HCT116 (cell line): ENCODE measurements at regions of chr15 and their contacts with region 1.

Region 1: DNA sequence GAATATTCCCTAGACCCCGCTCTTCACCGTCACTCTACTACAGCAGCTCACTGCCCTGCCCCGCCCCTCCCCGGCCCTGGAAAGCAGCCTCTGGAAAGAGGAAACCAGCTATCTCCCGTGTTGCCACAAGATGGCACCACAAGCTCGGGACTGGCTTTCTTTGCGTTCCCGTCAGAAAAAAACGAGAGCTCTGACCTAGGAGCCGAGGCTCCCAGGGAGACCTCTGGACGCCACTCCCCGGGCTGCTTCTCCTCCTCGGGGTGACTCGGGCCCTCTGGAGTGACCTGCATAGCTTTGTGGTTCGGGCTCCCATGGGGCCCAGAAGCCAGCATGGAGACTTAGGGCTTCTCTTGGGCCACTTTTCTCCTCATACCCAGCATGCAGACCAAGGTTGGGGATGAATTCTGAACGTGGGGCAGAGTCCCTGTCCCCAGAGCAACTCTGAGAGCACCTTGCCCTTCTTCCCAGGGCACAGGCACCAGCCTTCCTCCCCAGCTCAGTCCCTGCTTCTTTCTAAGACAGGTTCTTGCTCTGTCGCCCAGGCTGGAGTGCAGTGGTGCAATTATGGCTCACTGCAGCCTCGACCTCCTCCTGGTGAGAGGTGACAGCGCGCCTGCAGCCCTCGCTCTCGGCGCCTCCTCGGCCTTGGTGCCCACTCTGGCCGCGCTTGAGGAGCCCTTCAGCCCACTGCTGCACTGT is 19.0 kb downstream of the STOML1 start:
- DNase-seq: no peak
- ATAC-seq: peak; percentile 95
- H3K4me3 ChIP-seq: peak overlapping the region; percentile 17 to 52; a peak in 3 of 4 replicates
- H3K27ac ChIP-seq: no peak overlapping the region; the same call in 1 of the 2 replicates
- H3K4me1 ChIP-seq: peaks cover 0 to 8% of the 10 kb centered on the region in 2 experiments; a peak in 2 of 4 replicates
- H3K27me3 ChIP-seq: no peaks in the 10 kb centered on the region
- CTCF ChIP-seq: peak; percentile 87 to 93 (median 87)
- POLR2A ChIP-seq: no peak
- RAD21 ChIP-seq: peak; percentile 98

Region 2: DNA sequence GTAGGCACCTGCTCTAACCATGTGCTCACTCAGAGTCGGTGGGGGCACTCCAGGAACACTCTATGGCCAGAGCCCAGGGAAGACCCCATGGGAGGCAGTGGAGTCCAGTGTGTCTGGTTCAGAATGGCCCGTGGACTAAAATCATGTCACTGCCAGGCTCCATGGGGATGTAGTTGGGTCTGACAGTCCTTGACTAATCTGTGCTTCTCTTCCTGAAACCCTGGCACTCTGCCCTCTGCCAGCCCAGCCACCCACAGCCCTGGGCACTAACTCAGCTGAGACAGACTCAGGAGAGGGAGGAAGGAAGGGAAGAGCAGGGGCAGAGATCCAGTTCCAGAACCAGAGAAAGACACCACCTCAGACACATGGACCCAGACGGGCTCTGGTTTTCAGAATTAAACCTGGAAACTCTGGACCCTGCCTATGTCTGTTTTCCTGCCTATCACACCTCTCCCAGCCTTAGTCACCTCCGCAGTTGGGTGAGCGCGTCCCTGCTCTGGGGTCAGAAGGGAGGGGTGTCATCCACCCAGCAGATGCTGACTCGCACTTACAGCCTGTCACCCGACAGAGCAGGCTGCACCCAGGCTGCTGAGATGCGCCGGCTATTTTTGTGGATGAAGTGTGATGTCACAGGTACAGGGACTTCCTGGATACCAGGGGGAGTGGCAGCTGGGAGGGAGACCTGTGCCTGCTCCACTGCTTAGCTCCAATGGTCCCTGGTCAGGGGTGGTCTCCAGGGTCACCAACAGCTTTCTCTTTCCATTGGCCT is 163.2 kb before region 1 on chr15:
- CTCF ChIA-PET with region 1: no interaction called
- POLR2A ChIA-PET with region 1: no interaction called
- RAD21 ChIA-PET with region 1: no interaction called
- intact Hi-C with region 1: no loop called
- DNase-seq: no peak
- ATAC-seq: peak; percentile 71
- H3K4me3 ChIP-seq: no peak overlapping the region
- H3K27ac ChIP-seq: no peak overlapping the region
- H3K4me1 ChIP-seq: peaks cover 3 to 10% of the 10 kb centered on the region in 2 experiments; a peak in 3 of 4 replicates
- H3K27me3 ChIP-seq: no peaks in the 10 kb centered on the region
- CTCF ChIP-seq: no peak
- POLR2A ChIP-seq: no peak
- RAD21 ChIP-seq: no peak

Region 3: DNA sequence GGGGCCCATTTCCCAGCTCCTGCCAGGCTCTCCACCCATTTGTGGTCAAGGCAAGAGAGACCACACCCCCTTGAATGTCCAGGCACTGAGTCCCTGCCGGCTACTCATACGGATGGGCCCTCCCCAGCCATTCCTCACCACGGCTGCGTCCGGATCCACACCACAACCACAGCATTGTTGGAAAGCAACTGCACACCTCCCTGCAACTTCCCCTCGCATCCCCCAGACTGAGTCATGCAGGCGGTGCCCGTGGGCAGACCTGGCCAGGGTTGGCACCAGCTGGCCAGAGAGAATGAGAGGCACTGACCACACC is 16.4 kb before region 1 on chr15:
- CTCF ChIA-PET with region 1: interaction called, 15 read pairs
- POLR2A ChIA-PET with region 1: no interaction called
- RAD21 ChIA-PET with region 1: interaction called in 1 of 2 experiments, 4 read pairs
- intact Hi-C with region 1: no loop called
- DNase-seq: peak; percentile 79
- ATAC-seq: peak; percentile 81
- H3K4me3 ChIP-seq: peak overlapping the region; percentile 31 to 47
- H3K27ac ChIP-seq: peak overlapping the region; percentile 2; the same call in 1 of the 2 replicates
- H3K4me1 ChIP-seq: peaks cover 16 to 30% of the 10 kb centered on the region in 2 experiments
- H3K27me3 ChIP-seq: no peaks in the 10 kb centered on the region
- CTCF ChIP-seq: no peak
- POLR2A ChIP-seq: no peak
- RAD21 ChIP-seq: no peak

Region 4: DNA sequence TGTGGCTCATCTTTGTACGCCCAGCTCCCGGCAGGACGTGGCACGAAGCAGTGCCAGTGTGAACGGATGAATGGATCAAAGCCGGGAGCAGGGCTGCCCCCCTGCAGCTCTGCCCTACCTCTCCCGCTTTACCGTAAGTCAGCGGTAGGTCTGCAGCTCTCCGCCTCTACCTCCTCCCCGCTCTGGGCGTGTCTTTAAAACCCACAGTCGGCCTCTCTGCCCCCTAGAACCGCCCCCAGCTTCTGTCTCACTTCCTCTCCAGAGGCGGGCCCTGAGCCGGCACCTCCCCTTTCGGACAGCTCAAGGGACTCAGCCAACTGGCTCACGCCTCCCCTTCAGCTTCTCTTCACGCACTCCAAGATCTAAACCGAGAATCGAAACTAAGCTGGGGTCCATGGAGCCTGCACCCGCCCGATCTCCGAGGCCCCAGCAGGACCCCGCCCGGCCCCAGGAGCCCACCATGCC is 21.3 kb after region 1 on chr15 and contains the start of gene PML:
- CTCF ChIA-PET with region 1: interaction called, 16 read pairs
- POLR2A ChIA-PET with region 1: no interaction called
- RAD21 ChIA-PET with region 1: no interaction called
- intact Hi-C with region 1: no loop called
- DNase-seq: peak; percentile 82
- ATAC-seq: peak; percentile 91
- H3K4me3 ChIP-seq: peak within 1 kb of the TSS; percentile 84 to 88
- H3K27ac ChIP-seq: peak within 1 kb of the TSS; percentile 51; the same call in 1 of the 2 replicates
- H3K4me1 ChIP-seq: peaks cover 16 to 45% of the 10 kb centered on the region in 2 experiments
- H3K27me3 ChIP-seq: no peaks in the 10 kb centered on the region
- CTCF ChIP-seq: no peak
- POLR2A ChIP-seq: peak; percentile 60
- RAD21 ChIP-seq: no peak
- total RNA-seq, gene PML: 28.1 TPM

Region 5: GRCh38 chr15:74024687-74025086 is 51.6 kb after region 1 on chr15:
- CTCF ChIA-PET with region 1: no interaction called
- POLR2A ChIA-PET with region 1: no interaction called
- RAD21 ChIA-PET with region 1: no interaction called
- intact Hi-C with region 1: no loop called
- DNase-seq: no peak
- ATAC-seq: no peak
- H3K4me3 ChIP-seq: no peak overlapping the region
- H3K27ac ChIP-seq: no peak overlapping the region
- H3K4me1 ChIP-seq: no peaks in the 10 kb centered on the region
- H3K27me3 ChIP-seq: no peaks in the 10 kb centered on the region
- CTCF ChIP-seq: no peak
- POLR2A ChIP-seq: no peak
- RAD21 ChIP-seq: no peak

Region 6: GRCh38 chr15:74047781-74048180 is 74.6 kb after region 1 on chr15:
- CTCF ChIA-PET with region 1: interaction called, 36 read pairs
- POLR2A ChIA-PET with region 1: interaction called, 3 read pairs
- RAD21 ChIA-PET with region 1: interaction called, 6 to 13 read pairs
- intact Hi-C with region 1: no loop called
- DNase-seq: no peak
- ATAC-seq: no peak
- H3K4me3 ChIP-seq: no peak overlapping the region
- H3K27ac ChIP-seq: no peak overlapping the region
- H3K4me1 ChIP-seq: peaks cover 7 to 10% of the 10 kb centered on the region in 2 experiments
- H3K27me3 ChIP-seq: no peaks in the 10 kb centered on the region
- CTCF ChIP-seq: no peak
- POLR2A ChIP-seq: no peak
- RAD21 ChIP-seq: no peak

Region 7: DNA sequence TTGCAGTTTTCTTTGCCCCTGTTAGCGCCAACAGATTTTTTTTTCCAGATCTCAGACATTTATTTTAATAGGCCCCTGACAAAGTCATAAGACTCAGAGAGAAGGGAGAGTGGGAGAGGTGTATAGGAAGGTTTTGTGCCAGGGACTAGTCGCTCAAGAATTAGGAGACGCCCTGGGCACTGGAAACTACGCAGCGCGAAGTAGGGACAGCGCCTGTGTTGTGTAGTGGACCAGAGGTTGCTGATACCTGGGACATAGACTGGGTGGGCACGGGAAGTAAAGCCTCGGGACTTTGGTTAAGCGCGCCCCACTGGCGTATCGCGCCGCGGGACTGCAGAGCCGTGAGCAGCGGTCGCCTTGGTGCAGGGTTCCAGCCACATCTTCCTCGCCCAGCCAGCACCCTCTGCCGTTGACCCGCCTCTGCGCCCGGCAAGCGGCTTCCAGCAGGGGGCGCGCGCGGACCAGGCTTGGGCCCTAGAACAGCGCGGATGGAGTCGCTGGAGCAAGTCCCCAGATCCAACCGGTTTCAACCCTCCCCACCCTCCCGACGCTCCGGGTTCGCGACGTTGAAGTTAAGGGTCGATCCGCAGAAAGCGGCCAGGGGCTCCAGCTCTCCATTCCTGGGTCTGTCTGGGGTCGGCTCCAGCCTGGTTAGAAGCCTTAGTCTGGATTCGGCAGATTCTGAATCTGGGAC is 154.3 kb after region 1 on chr15:
- CTCF ChIA-PET with region 1: interaction called, 5 read pairs
- POLR2A ChIA-PET with region 1: no interaction called
- RAD21 ChIA-PET with region 1: no interaction called
- intact Hi-C with region 1: loop called (anchors 5 kb)
- DNase-seq: peak; percentile 69
- ATAC-seq: peak; percentile 100
- H3K4me3 ChIP-seq: peak overlapping the region; percentile 32 to 33
- H3K27ac ChIP-seq: no peak overlapping the region
- H3K4me1 ChIP-seq: peaks cover 0 to 9% of the 10 kb centered on the region in 2 experiments; a peak in 2 of 4 replicates
- H3K27me3 ChIP-seq: no peaks in the 10 kb centered on the region
- CTCF ChIP-seq: peak; percentile 83 to 99 (median 98)
- POLR2A ChIP-seq: no peak
- RAD21 ChIP-seq: peak; percentile 100

Region 8: DNA sequence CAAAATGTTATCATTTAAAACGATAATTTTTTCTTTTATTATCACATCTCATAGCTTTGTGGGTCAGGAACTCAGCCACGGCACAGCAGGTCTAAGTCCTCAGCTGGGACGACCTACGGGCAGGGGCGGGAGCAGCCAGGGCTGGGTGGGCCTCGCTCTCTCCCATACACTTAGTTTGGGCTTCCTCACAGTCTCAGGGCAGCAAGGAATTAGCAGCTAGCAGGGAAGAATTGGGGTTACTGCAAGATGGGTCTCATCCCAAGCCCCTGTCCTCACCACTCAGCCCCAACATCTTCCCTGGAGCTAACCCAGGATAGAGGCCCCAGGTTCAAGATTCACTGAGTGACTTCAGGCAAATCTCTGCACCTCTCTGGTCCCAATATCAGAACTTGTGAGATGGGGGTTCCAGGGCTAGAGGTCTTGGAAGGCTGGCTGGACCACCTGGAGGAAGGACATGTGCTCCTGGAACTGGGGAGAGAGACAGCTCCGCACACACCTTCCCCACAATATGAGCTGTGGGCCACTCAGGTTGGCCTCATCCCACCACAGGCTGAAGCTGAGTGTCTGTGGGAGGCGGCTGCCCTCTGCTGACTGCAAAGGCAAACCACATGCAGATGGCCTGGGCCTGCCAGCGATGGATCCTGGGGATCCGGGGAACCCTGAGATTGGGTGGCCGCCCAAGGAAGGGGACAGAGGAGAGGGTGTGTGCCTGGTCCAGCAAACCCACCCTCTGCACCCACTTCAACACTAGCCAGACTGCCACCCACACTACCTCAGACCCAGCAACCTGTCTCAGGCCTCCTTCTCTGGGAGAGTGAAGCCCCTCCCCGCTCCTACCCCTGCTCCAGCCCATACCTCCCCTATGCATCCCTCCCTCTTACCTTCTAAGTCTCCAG is 349.3 kb after region 1 on chr15:
- CTCF ChIA-PET with region 1: interaction called, 28 read pairs
- POLR2A ChIA-PET with region 1: no interaction called
- RAD21 ChIA-PET with region 1: interaction called, 3 to 5 read pairs
- intact Hi-C with region 1: loop called (anchors 1 kb)
- DNase-seq: peak; percentile 29
- ATAC-seq: peak; percentile 93
- H3K4me3 ChIP-seq: no peak overlapping the region
- H3K27ac ChIP-seq: no peak overlapping the region
- H3K4me1 ChIP-seq: no peaks in the 10 kb centered on the region; a peak in 2 of 4 replicates
- H3K27me3 ChIP-seq: no peaks in the 10 kb centered on the region
- CTCF ChIP-seq: peak; percentile 90 to 93 (median 93)
- POLR2A ChIP-seq: no peak
- RAD21 ChIP-seq: peak; percentile 94